ENCODE measurements at regions of chr16 and their contacts with region 1.

Region 1: GRCh38 chr16:78836802-78837491 is 737.5 kb downstream of the WWOX start:
- DNase-seq: peak; percentile 31
- H3K4me3 Mint-ChIP-seq: peak overlapping the region; percentile 51
- H3K27ac Mint-ChIP-seq: peak overlapping the region; percentile 93
- H3K4me1 Mint-ChIP-seq: peaks cover 37% of the 10 kb centered on the region
- H3K27me3 Mint-ChIP-seq: no peaks in the 10 kb centered on the region

Region 2: DNA sequence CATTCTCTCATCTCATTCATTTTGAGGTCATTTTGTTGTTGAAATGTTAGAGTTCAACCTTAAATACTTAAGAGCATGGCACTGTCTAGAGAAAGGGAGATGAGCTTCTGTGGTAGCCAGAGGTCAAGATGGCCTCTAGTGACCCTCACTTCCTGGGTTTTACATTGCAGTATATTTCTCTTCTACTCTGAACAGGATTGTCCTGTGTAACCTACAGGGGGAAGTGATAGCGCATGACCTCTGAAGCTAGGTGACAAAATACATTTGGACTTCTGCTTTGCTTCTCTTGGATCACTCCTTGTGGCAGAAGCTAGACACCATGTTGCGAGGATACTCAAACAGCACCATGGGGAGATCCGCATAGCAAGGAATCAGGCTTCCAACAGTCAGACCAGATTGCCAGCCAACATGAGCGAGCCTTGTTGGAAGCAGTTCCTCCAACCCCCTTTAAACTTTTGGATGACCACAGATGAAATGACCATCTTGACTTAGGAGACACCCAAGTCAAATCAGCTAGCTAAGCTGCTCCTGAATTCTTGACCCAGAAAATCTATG is 15.2 kb after region 1 on chr16:
- CTCF ChIA-PET with region 1: no interaction called
- POLR2A ChIA-PET with region 1: no interaction called
- intact Hi-C with region 1: no loop called
- DNase-seq: no peak
- H3K4me3 Mint-ChIP-seq: no peak overlapping the region
- H3K27ac Mint-ChIP-seq: no peak overlapping the region
- H3K4me1 Mint-ChIP-seq: peaks cover 12% of the 10 kb centered on the region
- H3K27me3 Mint-ChIP-seq: no peaks in the 10 kb centered on the region

Region 3: GRCh38 chr16:78957326-78958100 is 120.6 kb after region 1 on chr16:
- CTCF ChIA-PET with region 1: no interaction called
- POLR2A ChIA-PET with region 1: no interaction called
- intact Hi-C with region 1: no loop called
- DNase-seq: peak; percentile 74
- H3K4me3 Mint-ChIP-seq: no peak overlapping the region
- H3K27ac Mint-ChIP-seq: peak overlapping the region; percentile 92
- H3K4me1 Mint-ChIP-seq: peaks cover 53% of the 10 kb centered on the region
- H3K27me3 Mint-ChIP-seq: no peaks in the 10 kb centered on the region

Region 4: DNA sequence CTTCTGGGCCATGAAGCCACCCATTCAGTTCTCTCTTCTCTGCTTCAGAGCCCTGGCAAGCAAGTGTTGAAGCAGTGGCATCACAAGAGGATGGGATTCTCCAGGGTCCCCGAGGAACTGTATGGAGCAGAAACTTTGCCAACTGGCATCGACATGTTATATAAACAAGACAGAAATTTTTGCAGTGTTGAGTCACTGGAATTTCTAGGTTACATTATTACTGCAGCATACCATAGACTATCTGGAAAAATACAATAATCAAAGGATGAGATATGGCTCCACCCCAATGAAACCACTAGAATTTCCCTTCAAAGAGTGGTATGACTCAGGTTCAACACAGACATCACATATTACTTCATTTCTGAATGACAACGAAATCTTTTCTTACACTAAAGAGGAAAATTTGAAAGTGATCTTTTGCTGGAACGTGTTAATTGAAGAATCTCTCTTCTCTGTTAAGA is 1360.8 kb after region 1 on chr16:
- CTCF ChIA-PET with region 1: no interaction called
- POLR2A ChIA-PET with region 1: no interaction called
- intact Hi-C with region 1: loop called (anchors 5 kb)
- DNase-seq: peak; percentile 10
- H3K4me3 Mint-ChIP-seq: no peak overlapping the region
- H3K27ac Mint-ChIP-seq: peak overlapping the region; percentile 42
- H3K4me1 Mint-ChIP-seq: peaks cover 7% of the 10 kb centered on the region
- H3K27me3 Mint-ChIP-seq: peaks cover 27% of the 10 kb centered on the region

Measured in activated CD4-positive, alpha-beta memory T cell treated with anti-CD3 and anti-CD28 coated beads for 36 hours (primary cell).